Astrocyte of the cerebellum (primary cell): ENCODE measurements at regions of chr7 and their contacts with region 1.

Region 1: DNA sequence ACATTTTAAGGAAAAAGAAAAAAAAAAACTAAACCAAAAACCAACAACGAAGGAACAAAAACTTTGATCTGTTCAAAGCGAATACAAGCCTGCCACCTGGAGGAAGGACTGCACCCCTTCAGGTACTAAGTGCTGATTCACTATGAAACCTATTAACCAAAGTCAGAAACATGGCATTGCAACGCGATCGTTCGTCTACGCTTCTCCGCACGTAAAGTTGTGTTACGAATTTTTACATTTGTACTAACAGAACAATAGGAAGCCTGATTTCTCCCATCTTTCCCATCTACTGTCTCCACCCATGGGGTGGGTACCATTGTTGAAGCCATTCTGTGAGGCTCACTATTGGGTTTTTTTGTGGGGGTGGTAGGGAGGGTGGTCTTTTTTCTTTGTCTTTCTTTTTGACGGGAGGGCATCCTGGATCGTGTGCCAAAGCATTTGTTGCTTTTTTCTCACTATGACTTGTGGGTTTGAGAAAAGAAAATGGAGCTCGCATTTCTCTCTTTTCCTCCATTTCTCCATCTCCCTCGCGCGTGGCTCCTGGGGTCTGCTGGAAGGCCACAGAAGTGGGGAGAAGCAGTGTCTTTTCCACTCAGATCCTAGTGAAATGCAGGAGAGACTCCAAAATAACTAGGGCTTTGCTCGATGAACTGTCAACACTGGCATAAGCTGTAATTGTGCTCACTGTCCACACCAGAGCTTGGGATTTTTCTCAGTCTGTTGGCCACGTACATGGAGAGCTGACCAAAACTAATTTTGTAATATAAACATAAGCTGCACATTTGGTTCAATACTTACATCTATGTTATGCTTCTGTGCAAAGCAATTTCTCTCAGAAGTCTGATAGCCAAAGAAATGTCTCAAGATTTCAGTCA is 100.9 kb upstream of the YAE1 start:
- DNase-seq: peak; percentile 50
- H3K4me3 ChIP-seq: no peak overlapping the region
- CTCF ChIP-seq: peak; percentile 83

Region 2: DNA sequence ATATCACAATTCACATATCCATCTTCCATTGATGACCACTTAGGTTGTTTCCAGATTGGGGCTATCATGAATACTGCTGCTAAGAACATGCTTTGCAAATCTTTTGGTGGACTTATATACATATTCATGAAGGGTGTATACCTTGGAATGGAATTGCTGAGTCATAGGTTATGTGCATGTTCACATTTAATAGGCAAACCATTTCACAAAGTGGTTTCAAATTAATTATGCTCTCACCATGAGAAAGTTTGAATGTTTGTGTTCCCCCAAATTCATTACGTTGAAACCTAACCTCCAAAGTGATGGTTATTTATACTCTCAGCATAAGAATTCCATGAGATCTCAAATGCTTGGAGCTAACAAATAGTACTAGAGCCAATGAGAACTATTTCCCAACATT is 642.7 kb before region 1 on chr7:
- in situ Hi-C with region 1: loop called (anchors 25 kb)
- DNase-seq: peak; percentile 23
- H3K4me3 ChIP-seq: no peak overlapping the region
- CTCF ChIP-seq: no peak

Region 3: GRCh38 chr7:38932509-38933168 is 532.7 kb before region 1 on chr7:
- in situ Hi-C with region 1: loop called (anchors 25 kb)
- DNase-seq: peak; percentile 29
- H3K4me3 ChIP-seq: no peak overlapping the region
- CTCF ChIP-seq: peak; percentile 98

Region 4: GRCh38 chr7:39383136-39383535 is 82.2 kb before region 1 on chr7:
- in situ Hi-C with region 1: no loop called
- DNase-seq: no peak
- H3K4me3 ChIP-seq: no peak overlapping the region
- CTCF ChIP-seq: no peak